PC-9 (cell line): ENCODE measurements at regions of chr13 and their contacts with region 1.

Region 1: DNA sequence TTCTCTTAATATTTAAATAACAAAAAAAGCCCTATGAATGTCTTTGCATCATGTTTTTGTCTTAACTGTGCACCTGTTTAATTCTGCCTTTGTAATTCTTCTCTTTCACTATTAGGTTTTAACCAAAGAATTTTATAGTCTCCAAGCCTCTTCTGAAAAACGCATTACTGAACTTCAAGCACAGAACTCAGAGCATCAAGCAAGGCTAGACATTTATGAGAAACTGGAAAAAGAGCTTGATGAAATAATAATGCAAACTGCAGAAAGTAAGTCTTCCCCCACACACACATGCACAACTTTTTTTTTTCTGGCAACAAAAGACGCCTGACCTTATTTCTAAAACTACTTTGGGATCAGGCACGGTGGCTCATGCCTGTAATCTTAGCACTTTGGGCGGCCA is 126.5 kb downstream of the PIBF1 start:
- DNase-seq: no peak
- H3K4me3 ChIP-seq: no peak overlapping the region
- H3K27ac ChIP-seq: no peak overlapping the region
- H3K4me1 ChIP-seq: no peaks in the 10 kb centered on the region
- H3K27me3 ChIP-seq: no peaks in the 10 kb centered on the region
- CTCF ChIP-seq: no peak

Region 2: DNA sequence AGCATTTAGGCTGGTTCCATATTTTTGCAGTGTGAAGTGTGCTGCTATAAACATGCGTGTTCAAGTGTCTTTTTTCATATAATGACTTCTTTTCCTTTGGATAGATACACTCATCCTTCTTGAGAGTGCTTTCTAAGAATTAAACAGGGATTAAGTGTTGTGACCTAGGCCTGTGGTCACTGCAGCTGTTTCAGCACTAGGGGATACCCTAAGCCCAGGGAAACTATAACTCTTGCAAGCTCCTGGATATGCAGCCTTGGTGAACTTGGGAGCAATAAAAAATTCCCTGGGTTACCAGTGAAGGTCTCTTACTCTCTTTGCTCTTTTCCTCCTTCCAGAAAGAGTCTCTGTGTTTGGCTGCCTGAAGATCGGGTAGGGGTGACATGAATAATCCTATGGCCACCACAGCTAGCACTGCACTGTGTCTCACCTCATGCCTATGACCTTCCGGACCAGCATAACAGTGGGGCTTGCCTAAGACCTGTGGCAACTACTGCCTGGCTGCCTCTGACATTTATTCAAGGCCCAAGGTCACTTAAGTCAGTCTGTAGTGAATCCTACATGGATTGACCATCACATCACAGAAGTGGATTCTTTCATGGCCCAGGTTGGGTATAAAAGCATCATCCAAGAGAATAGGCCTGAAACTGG is 1841.1 kb before region 1 on chr13:
- CTCF ChIA-PET with region 1: no interaction called
- POLR2A ChIA-PET with region 1: no interaction called
- intact Hi-C with region 1: no loop called
- DNase-seq: no peak
- H3K4me3 ChIP-seq: no peak overlapping the region
- H3K27ac ChIP-seq: no peak overlapping the region
- H3K4me1 ChIP-seq: no peaks in the 10 kb centered on the region
- H3K27me3 ChIP-seq: no peaks in the 10 kb centered on the region
- CTCF ChIP-seq: no peak

Region 3: DNA sequence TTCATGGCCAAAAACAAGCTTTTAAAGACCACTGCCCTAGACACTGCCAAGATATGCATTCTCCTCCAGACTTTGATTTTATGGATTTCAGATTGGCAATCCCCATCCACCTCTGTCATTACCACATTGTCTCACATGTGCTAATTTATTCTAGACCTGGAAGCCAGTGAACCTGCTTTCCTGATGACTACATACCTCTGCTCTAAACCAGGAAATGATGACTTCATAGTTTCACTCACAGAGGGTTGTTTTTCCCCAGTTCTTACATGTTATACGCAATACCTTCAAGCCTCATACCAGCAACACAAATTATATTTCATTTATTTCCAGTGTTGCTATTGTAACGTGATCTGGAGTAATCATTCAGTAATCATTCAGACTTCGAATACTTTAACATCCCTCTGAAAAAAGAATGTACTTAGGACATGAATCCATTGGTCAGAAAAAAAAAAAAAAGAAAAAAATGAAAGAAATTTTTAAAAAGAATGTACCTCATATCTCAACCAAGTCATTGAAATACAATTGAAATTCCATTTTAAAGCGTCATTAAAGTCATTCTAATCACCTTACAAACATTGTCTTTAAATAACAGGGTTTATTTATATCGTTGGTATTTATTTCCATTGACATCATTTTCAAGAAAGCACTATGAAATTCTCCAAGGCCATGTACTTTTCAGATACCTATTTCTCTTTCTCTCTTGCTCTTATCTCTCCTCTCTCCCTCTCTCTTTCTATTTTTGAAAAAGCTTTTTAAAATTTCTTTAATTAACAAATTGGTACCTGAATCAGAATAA is 117.0 kb after region 1 on chr13:
- CTCF ChIA-PET with region 1: no interaction called
- POLR2A ChIA-PET with region 1: interaction called, 10 read pairs
- intact Hi-C with region 1: no loop called
- DNase-seq: peak in 1 of 2 experiments; percentile 78
- H3K4me3 ChIP-seq: no peak overlapping the region
- H3K27ac ChIP-seq: peak overlapping the region; percentile 28
- H3K4me1 ChIP-seq: no peaks in the 10 kb centered on the region
- H3K27me3 ChIP-seq: no peaks in the 10 kb centered on the region
- CTCF ChIP-seq: no peak